ENCODE measurements at regions of chr19 and their contacts with region 1.

Region 1: DNA sequence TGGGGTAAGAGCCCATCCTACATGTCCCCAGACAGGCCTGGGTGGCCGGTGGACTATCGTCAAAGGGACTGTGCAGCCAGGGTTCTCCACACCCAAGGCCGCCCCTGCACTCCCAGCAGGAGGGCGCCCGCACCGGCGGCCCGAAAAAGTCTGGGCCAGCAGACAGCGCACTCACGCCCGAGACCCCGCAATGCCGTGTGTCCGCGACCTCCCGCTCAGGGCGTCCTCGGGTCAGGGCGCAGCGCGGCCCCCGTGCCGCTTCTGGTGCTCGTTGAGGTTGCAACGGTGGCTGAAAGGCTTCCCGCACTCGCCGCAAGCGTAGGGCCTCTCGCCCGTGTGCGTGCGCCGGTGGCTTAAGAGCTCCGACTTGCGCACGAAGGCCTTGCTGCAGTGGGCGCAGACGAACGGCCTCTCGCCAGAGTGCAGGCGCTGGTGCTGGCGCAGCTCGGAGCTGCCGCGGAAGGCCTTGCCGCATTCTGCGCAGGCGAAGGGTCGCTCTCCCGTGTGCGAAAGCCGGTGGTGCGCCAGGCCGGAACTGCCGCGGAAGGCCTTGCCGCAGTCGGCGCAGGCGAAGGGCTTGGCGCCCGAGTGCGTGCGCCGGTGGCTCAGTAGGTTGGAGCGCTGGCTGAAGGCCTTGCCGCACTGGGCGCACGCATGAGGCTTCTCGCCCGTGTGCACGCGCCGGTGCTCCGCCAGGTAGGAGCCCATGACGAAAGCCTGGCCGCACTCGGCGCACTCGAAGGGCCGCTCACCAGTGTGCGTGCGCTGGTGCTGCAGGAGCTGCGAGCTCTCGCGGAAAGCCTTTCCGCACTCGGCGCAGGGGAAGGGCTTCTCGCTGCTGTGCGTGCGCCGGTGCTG is 2.8 kb upstream of the A1BG start:
- DNase-seq: peak; percentile 76
- ATAC-seq: peak; percentile 72
- H3K4me3 Mint-ChIP-seq: peak overlapping the region; percentile 37
- H3K27ac Mint-ChIP-seq: peak overlapping the region; percentile 65
- H3K4me1 Mint-ChIP-seq: peaks cover 14% of the 10 kb centered on the region
- H3K27me3 Mint-ChIP-seq: no peaks in the 10 kb centered on the region

Region 2: GRCh38 chr19:58380722-58381466 is 24.8 kb after region 1 on chr19 and contains the start of gene ZNF837:
- POLR2A ChIA-PET with region 1: interaction called, 34 read pairs
- DNase-seq: peak; percentile 95
- ATAC-seq: peak; percentile 93
- H3K4me3 Mint-ChIP-seq: peak within 1 kb of the TSS; percentile 92
- H3K27ac Mint-ChIP-seq: peak within 1 kb of the TSS; percentile 96
- H3K4me1 Mint-ChIP-seq: peaks cover 17% of the 10 kb centered on the region
- H3K27me3 Mint-ChIP-seq: no peaks in the 10 kb centered on the region
- total RNA-seq, gene ZNF837: 2.9 to 3.5 TPM